ENCODE measurements at regions of chr1 and their contacts with region 1.

Region 1: DNA sequence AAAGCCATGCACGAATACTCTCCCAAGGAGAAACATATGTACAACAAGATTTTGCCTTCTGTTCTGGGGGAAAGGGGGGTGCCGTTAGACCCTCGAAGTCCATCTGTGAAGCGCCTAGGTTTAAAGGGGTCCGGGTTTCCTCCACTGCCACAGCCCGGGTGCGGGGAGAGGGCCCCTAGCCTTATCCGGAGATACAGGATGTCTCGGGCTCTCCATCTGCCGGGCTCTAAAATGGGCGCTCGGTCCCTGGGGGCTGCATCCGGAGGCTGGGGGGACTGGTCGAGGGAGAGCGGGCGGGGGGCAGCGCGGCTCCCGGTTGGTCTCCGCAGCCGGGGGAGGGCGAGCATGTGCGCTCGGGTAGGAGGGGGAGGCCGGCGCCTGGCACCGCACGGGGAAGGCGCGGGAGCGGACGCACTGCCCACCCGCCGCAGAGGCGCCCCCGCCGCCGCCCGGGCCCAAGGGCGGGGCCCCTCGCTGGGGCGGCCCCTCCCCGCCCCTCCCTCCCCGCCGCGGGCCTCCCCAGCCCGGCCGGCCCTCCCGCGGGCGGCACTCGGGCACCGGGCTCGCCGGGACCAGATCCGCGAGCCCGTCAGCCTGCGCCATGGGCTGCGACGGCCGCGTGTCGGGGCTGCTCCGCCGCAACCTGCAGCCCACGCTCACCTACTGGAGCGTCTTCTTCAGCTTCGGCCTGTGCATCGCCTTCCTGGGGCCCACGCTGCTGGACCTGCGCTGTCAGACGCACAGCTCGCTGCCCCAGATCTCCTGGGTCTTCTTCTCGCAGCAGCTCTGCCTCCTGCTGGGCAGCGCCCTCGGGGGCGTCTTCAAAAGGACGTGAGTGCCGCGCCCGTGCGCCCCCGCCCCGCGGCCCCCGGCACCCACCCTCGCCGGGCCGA is 63.1 kb downstream of the ELK4 start:
- DNase-seq: peak in 1 of 2 donors; percentile 59
- H3K4me3 ChIP-seq: peak overlapping the region; percentile 45 to 56
- H3K27ac ChIP-seq: no peak overlapping the region
- H3K4me1 ChIP-seq: peaks cover 2 to 4% of the 10 kb centered on the region in 2 donors
- H3K27me3 ChIP-seq: peaks cover 3% of the 10 kb centered on the region
- CTCF ChIP-seq: no peak

Region 2: GRCh38 chr1:205528887-205529825 is 39.6 kb before region 1 on chr1:
- intact Hi-C with region 1: loop called (anchors 2 kb)
- DNase-seq: peak in 1 of 2 donors; percentile 86
- H3K4me3 ChIP-seq: peak overlapping the region; percentile 14 to 60
- H3K27ac ChIP-seq: no peak overlapping the region
- H3K4me1 ChIP-seq: peaks cover 2 to 3% of the 10 kb centered on the region in 2 donors
- H3K27me3 ChIP-seq: no peaks in the 10 kb centered on the region
- CTCF ChIP-seq: peak; percentile 83 to 96 (median 94)

Region 3: GRCh38 chr1:205700865-205701401 is 132.2 kb after region 1 on chr1:
- intact Hi-C with region 1: no loop called
- DNase-seq: no peak
- H3K4me3 ChIP-seq: no peak overlapping the region
- H3K27ac ChIP-seq: no peak overlapping the region
- H3K4me1 ChIP-seq: no peaks in the 10 kb centered on the region
- H3K27me3 ChIP-seq: no peaks in the 10 kb centered on the region
- CTCF ChIP-seq: no peak

Measured in ascending aorta (tissue), 2 donors.